ENCODE measurements at regions of chr10 and their contacts with region 1.

Region 1: DNA sequence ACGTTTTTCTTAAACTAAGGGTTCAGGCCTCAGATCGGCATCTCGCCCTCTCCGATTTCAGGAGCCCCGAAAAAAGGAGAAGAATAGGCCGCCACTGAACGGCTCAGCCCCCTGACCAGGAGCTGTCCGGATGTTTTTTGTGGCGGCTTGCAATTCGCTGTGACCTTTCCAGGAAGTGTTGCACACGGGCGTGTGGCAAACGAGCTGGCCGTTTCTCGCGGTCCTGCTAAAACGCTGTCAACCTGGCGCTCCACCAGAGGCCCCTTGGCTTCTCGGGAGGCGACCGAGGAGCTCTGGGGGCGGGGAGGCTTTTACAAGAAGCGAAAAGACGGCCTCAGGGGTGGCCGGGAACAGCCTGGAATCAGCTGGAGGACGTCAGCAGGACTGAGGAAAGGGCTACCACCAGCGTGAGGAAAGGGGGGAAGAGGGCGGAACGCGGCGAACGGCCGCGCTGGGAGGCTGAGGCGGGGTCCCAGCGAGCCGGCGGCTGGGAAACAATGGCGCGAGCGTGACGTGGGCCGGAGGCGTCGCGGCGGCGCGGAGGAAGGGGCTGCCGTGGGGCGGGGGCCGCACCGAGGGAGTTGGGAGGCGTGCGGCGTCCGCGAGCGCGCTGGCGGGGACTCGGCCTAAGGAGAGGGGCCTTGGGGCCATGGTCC is 493 bp downstream of the NT5C2 start:
- DNase-seq: peak; percentile 61
- H3K4me3 ChIP-seq: peak overlapping the region; percentile 86
- CTCF ChIP-seq: no peak

Region 2: DNA sequence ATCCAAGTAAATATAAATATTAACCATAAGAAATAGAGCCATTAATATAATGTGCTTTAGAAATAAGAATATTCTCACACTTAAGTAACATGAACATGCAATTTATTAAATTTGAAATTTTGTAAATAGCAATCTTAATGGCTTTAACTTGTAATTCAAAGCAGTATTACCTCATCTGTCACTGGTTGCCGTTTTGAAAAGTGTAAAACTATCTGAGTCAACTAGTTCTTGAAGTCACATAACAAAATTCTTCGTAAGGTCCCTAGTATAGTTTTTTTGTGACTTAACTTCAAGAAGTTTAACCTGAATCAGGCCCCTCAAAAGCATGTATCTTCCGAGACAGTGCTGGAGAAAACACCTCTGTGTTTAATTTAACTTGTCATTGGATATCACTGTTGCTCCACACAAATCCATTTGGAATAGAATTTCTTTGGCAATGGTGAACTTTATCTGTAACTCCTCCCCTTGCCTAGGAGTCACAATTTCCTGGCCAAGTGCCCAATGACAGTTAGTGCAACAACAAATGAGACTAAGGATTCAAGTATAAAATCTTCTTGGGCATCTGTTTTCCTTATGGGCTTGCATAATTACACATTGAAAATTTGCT is 46.6 kb before region 1 on chr10:
- in situ Hi-C with region 1: loop called (anchors 5 kb)
- DNase-seq: peak; percentile 55
- H3K4me3 ChIP-seq: no peak overlapping the region
- CTCF ChIP-seq: no peak

Region 3: DNA sequence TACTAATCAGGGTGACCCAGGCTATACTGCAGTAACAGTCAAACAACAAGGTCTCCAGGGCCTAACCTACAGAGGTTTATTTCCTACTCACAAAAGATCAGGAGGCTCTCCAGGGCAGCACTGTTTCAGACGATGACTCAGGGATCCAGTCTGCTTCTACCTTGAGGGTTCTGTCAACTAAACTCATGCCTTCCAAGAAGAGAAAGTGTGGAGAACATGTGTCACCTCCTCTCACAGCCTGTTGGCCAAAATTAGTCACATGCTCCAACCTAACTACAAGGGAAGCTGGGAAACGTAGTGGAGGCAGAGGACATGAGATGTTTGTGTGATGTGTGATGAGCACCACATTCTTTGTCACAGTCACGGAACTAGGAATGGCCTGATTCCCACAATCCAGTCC is 69.7 kb after region 1 on chr10:
- in situ Hi-C with region 1: no loop called
- DNase-seq: no peak
- H3K4me3 ChIP-seq: no peak overlapping the region
- CTCF ChIP-seq: no peak

Region 4: GRCh38 chr10:103276896-103277712 is 84.5 kb after region 1 on chr10 and contains the start of gene INA:
- in situ Hi-C with region 1: no loop called
- DNase-seq: no peak
- H3K4me3 ChIP-seq: peak within 1 kb of the TSS; percentile 36
- CTCF ChIP-seq: no peak

Measured in astrocyte of the cerebellum (primary cell).